ENCODE measurements at regions of chr5 and their contacts with region 1.

Region 1: DNA sequence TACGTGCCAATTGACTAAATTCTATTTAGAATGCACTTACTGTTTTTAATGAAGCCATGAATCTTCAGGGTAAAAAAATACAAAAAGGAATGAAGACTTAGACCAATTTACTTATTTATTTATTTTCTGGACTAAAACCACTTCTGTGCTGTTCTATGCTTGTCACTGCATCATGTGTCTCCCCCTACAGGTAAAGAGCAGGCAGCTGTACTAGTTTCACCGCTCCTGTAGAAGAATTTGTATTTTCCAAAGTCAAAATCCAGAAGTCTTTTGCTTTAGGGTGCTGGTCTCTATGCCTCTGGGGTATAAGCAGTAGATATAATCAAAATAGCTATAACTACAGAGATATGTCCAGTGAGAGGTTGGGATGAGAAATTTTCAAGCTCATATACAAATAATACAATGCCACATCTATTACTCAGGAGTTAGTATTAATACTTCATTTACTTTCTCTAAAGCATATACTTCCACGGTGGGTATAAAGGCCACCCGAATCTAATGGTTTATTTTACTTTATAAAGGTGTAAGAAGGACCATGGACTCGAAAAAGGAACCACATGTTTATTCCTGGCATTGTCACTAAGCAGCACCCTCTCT is 591.5 kb downstream of the RAB3C start:
- DNase-seq: peak in 27 of 35 experiments; percentile 2 to 78 (median 19)
- ATAC-seq: peak; percentile 69 to 86 (median 78)
- H3K4me3 ChIP-seq: no peak overlapping the region
- H3K4me3 Mint-ChIP-seq: no peak overlapping the region
- H3K27ac ChIP-seq: no peak overlapping the region
- H3K27ac Mint-ChIP-seq: no peak overlapping the region
- H3K4me1 ChIP-seq: peaks cover 0 to 2% of the 10 kb centered on the region in 2 experiments
- H3K4me1 Mint-ChIP-seq: peaks cover 5 to 9% (median 8%) of the 10 kb centered on the region in 3 donors
- H3K27me3 ChIP-seq: no peaks in the 10 kb centered on the region
- H3K27me3 Mint-ChIP-seq: no peaks in the 10 kb centered on the region

Region 2: DNA sequence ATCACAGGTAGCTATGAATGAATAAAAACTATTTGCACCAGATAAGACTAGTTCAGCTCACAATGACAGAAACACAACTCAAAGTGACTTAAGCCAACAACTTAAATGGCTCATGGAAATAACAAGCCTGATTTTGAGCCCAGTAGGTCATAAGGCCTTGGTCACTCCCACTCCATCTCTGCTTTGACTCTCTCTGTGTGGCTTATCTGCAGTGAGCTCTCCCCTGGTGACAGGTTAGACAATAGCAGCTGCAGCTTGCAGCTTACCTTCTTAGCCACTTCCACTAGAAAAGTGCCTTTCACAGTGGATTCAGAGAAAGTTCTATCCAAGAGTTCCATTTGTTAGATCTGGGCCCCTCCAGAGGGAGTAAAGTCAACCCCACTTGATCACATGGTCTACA is 275.8 kb before region 1 on chr5:
- CTCF ChIA-PET with region 1: interaction called, 13 to 53 read pairs
- POLR2A ChIA-PET with region 1: no interaction called
- DNase-seq: no peak
- ATAC-seq: no peak
- H3K4me3 ChIP-seq: no peak overlapping the region
- H3K4me3 Mint-ChIP-seq: no peak overlapping the region
- H3K27ac ChIP-seq: no peak overlapping the region
- H3K27ac Mint-ChIP-seq: no peak overlapping the region
- H3K4me1 ChIP-seq: no peaks in the 10 kb centered on the region
- H3K4me1 Mint-ChIP-seq: no peaks in the 10 kb centered on the region
- H3K27me3 ChIP-seq: no peaks in the 10 kb centered on the region
- H3K27me3 Mint-ChIP-seq: no peaks in the 10 kb centered on the region

Region 3: DNA sequence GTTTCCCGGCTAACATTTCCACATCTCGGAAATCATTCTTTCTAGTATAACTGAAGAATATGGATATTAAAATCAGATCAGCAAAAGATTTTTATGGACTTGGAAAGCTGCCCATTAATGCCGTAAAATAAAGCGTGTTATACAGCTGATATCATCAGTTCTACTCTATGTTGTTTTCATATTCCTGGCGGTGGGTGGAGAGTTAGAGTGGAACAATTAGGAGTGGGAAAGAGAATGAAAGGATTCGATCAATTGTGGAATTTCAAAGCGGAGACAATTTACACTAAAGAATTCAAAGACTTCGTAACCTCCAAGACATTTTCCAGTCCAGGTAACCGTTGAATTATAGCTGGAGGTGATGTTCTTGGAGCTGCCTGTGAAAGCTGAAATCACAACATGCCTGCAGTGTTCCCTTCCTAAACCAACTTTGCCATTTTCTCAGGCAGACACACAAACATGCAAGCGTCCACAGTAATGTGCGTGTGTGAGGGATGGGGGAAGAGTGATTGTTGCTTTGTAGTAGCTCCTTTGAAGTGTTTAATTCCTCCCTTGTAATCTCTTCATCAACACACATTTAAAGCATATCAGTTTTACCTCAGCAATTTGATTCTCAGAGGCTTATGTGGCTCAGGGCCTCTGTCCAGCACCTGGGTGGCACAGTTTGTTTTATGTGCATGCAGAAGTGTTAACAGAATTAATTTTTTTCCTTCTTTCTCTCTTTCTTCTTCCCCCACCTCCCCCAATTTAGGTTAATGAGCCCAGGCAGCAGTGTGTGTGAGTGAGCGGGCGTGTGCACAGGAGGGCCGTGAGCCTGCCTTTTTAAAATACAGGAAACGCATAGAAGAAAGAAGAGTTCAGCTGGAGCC is 47.4 kb before region 1 on chr5:
- CTCF ChIA-PET with region 1: interaction called, 16 to 23 read pairs
- POLR2A ChIA-PET with region 1: interaction called in 1 of 2 experiments, 3 read pairs
- DNase-seq: peak in 11 of 35 experiments; percentile 2 to 71 (median 13)
- ATAC-seq: peak; percentile 7 to 23 (median 16)
- H3K4me3 ChIP-seq: peak overlapping the region; percentile 31 to 59
- H3K4me3 Mint-ChIP-seq: no peak overlapping the region
- H3K27ac ChIP-seq: peak overlapping the region; percentile 82
- H3K27ac Mint-ChIP-seq: no peak overlapping the region
- H3K4me1 ChIP-seq: peaks cover 36 to 59% of the 10 kb centered on the region in 2 experiments
- H3K4me1 Mint-ChIP-seq: peaks cover 7 to 17% (median 15%) of the 10 kb centered on the region in 3 donors
- H3K27me3 ChIP-seq: no peaks in the 10 kb centered on the region
- H3K27me3 Mint-ChIP-seq: no peaks in the 10 kb centered on the region

Region 4: GRCh38 chr5:59158165-59158564 is 16.2 kb before region 1 on chr5:
- CTCF ChIA-PET with region 1: interaction called, 9 to 12 read pairs
- POLR2A ChIA-PET with region 1: interaction called in 1 of 2 experiments, 11 read pairs
- DNase-seq: no peak
- ATAC-seq: no peak
- H3K4me3 ChIP-seq: no peak overlapping the region
- H3K4me3 Mint-ChIP-seq: no peak overlapping the region
- H3K27ac ChIP-seq: no peak overlapping the region
- H3K27ac Mint-ChIP-seq: no peak overlapping the region
- H3K4me1 ChIP-seq: peaks cover 0 to 33% of the 10 kb centered on the region in 2 experiments
- H3K4me1 Mint-ChIP-seq: peaks cover 13 to 15% (median 14%) of the 10 kb centered on the region in 3 donors
- H3K27me3 ChIP-seq: no peaks in the 10 kb centered on the region
- H3K27me3 Mint-ChIP-seq: no peaks in the 10 kb centered on the region